Panc1 (cell line): ENCODE measurements at regions of chr17 and their contacts with region 1.

Region 1: DNA sequence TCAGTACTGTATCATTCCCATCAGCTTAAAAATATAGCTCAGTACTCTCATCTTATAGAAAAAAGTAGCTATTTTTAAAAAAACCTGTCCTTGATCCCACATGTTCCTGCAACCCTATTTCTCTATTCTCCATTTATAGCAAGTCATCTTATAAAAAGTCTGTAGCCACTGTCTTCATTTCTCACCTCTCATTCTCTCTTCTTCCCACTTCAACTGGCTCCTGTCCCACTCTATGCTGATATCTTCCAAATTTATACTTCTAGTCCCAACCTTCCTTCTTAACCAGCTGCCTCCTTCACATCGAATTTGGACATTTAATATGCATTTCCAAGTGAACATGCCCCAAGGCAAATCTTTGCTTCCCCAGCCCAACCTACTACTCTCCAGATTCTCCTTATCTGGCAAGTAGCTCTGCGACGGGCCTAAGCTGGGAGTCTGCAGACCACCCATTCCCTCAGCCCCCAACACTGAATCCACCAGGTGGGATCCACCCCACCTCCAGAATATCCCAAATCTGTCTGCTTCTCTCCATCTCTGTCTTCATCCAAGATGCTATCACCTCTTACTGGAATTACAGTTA is 52.0 kb upstream of the TANC2 start:
- DNase-seq: no peak
- ATAC-seq: no peak
- H3K4me3 ChIP-seq: no peak overlapping the region
- H3K27ac ChIP-seq: no peak overlapping the region
- H3K4me1 ChIP-seq: no peaks in the 10 kb centered on the region
- H3K27me3 ChIP-seq: no peaks in the 10 kb centered on the region
- CTCF ChIP-seq: no peak

Region 2: GRCh38 chr17:62882878-62883277 is 31.2 kb before region 1 on chr17:
- CTCF ChIA-PET with region 1: interaction called, 11 read pairs
- POLR2A ChIA-PET with region 1: no interaction called
- in situ Hi-C with region 1: no loop called
- intact Hi-C with region 1: no loop called
- DNase-seq: no peak
- ATAC-seq: no peak
- H3K4me3 ChIP-seq: no peak overlapping the region
- H3K27ac ChIP-seq: no peak overlapping the region; the same call in 1 of the 2 replicates
- H3K4me1 ChIP-seq: no peaks in the 10 kb centered on the region
- H3K27me3 ChIP-seq: no peaks in the 10 kb centered on the region
- CTCF ChIP-seq: no peak

Region 3: DNA sequence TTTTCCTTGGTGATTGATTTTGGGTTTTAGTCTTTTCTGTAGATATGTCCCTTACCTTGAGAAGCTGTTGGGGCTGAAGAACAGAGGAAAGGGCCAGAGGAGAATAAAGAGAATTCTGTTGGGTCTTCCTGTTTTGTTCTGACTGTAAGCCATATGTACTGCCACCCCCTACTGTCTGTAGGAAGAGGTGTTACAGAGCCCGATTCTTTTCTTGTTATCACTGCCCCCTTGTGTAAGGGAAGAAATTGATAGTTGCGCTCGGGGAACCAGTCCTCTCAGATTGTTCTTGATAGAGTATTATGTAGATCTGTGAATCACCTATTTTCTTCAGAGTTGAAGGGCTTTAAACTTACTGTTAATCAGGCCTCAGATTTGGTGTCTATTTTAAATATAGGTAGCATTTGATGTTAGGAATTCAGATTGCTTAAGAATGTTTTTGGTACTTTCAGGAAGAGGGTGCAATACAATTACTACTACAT is 54.4 kb after region 1 on chr17:
- CTCF ChIA-PET with region 1: no interaction called
- POLR2A ChIA-PET with region 1: no interaction called
- in situ Hi-C with region 1: no loop called
- intact Hi-C with region 1: no loop called
- DNase-seq: peak; percentile 77
- ATAC-seq: peak; percentile 76
- H3K4me3 ChIP-seq: peak overlapping the region; percentile 77 to 95
- H3K27ac ChIP-seq: peak overlapping the region; percentile 61
- H3K4me1 ChIP-seq: peaks cover 28% of the 10 kb centered on the region
- H3K27me3 ChIP-seq: no peaks in the 10 kb centered on the region
- CTCF ChIP-seq: peak; percentile 89